Heart left ventricle (tissue), 16 donors: ENCODE measurements at regions of chr20 and their contacts with region 1.

Region 1: GRCh38 chr20:46689082-46689754 is at the start of gene TP53RK:
- DNase-seq: peak; percentile 98 to 99 (median 99)
- ATAC-seq: peak; percentile 97 to 99 (median 98)
- H3K4me3 ChIP-seq: peak within 1 kb of the TSS; percentile 63 to 92 (median 76)
- H3K27ac ChIP-seq: peak within 1 kb of the TSS; percentile 75 to 98 (median 92)
- H3K4me1 ChIP-seq: peaks cover 0 to 33% (median 21%) of the 10 kb centered on the region in 12 donors
- H3K27me3 ChIP-seq: no peaks in the 10 kb centered on the region
- CTCF ChIP-seq: peak in 9 of 12 donors; percentile 10 to 56 (median 39)
- POLR2A ChIP-seq: peak in 1 of 2 donors; percentile 87
- total RNA-seq, gene TP53RK: 5.1 to 10.8 (median 7.9) TPM

Region 2: GRCh38 chr20:46349035-46349741 is 340.0 kb before region 1 on chr20:
- intact Hi-C with region 1: no loop called
- DNase-seq: peak; percentile 41 to 81 (median 55)
- ATAC-seq: peak; percentile 47 to 80 (median 71)
- H3K4me3 ChIP-seq: peak overlapping the region in 4 of 12 donors; percentile 14 to 34 (median 20)
- H3K27ac ChIP-seq: peak overlapping the region in 1 of 12 donors; percentile 0
- H3K4me1 ChIP-seq: peaks cover 0 to 22% (median 9%) of the 10 kb centered on the region in 12 donors
- H3K27me3 ChIP-seq: no peaks in the 10 kb centered on the region
- CTCF ChIP-seq: peak; percentile 65 to 83 (median 77)
- POLR2A ChIP-seq: no peak

Region 3: DNA sequence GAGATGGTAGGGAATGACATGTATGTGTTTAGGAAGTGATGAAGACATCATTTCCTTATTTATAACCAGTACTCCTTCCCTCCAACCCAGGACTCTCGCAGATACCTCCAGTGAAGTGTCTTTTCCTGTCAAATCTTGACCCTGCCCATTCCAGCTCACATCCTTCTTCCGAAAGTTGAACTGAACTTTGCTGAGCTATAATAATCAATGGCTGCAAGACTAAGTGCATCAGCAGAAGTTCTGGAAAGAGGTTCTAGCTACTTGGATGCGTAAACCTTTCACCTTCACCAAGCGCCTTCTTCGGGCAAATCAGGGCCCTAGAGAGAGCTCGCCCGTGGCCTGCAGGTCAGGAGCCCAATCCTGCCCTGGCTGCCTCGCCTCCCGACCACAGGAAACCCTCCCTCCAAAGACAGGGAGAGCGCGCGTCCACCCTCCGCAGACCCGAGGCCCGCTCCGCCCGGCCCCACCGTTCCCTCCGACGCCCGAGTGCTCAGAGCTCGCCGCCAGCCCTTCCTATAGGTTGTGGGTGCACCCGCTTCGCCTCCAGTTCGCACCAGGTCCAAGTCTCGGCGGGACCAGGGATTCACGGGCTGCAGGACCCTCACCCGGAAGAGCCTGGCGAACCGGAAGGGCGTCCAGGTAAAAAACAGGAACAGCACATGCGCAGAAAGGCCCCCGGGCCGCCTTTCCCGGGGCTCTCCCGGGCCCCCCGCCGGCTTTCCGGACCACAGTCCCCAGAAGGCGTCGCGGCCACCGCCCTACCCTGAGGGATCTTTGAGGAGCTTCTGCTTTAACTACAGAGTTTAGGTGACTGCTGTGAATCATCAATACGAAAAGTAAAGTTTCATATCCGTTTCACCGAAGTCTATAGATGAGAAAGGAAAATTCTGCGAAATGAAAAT is 176.0 kb before region 1 on chr20 and contains the start of gene ZNF334:
- intact Hi-C with region 1: loop called in 1 of 10 experiments (anchors 5 kb)
- DNase-seq: peak; percentile 47 to 92 (median 81)
- ATAC-seq: peak; percentile 86 to 98 (median 97)
- H3K4me3 ChIP-seq: peak within 1 kb of the TSS; percentile 42 to 86 (median 69)
- H3K27ac ChIP-seq: peak within 1 kb of the TSS in 9 of 12 donors; percentile 16 to 87 (median 55)
- H3K4me1 ChIP-seq: peaks cover 0 to 13% (median 7%) of the 10 kb centered on the region in 12 donors
- H3K27me3 ChIP-seq: peaks cover 0 to 28% (median 4%) of the 10 kb centered on the region in 9 donors
- CTCF ChIP-seq: no peak
- POLR2A ChIP-seq: peak in 1 of 2 donors; percentile 26
- total RNA-seq, gene ZNF334: 0.31 to 2.5 (median 1.3) TPM

Region 4: GRCh38 chr20:46562373-46563169 is 126.6 kb before region 1 on chr20:
- intact Hi-C with region 1: loop called in 8 of 10 experiments (anchors 2 to 5 kb)
- DNase-seq: peak in 4 of 5 donors; percentile 48 to 77 (median 62)
- ATAC-seq: peak; percentile 79 to 88 (median 84)
- H3K4me3 ChIP-seq: peak overlapping the region in 11 of 12 donors; percentile 16 to 55 (median 41)
- H3K27ac ChIP-seq: peak overlapping the region in 8 of 12 donors; percentile 4 to 70 (median 50)
- H3K4me1 ChIP-seq: peaks cover 0 to 20% (median 8%) of the 10 kb centered on the region in 12 donors
- H3K27me3 ChIP-seq: no peaks in the 10 kb centered on the region
- CTCF ChIP-seq: peak; percentile 85 to 97 (median 92)
- POLR2A ChIP-seq: no peak

Region 5: DNA sequence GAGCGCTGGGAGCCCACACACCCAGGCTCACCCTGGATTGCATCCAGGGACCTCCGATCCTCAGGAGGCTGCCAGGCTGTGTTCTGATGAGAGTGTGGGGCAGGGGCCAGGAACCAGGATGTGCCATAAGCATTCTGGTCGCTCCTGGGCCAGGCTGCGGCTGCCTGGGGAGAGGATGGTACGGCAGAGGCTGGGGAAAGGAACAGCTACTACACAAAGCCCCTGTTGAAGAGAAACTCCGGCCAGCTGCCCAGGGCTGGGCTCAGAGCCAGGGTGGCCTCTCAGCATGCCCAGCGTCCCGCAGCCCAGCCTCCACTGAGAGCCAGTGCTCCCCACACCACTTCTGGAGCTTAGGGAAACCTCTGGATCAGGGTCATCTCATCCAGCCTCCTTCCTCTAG is 117.1 kb before region 1 on chr20:
- intact Hi-C with region 1: loop called in 1 of 10 experiments (anchors 5 kb)
- DNase-seq: peak; percentile 48 to 73 (median 60)
- ATAC-seq: peak in 3 of 4 donors; percentile 51 to 69 (median 54)
- H3K4me3 ChIP-seq: peak overlapping the region in 1 of 12 donors; percentile 12
- H3K27ac ChIP-seq: peak overlapping the region in 4 of 12 donors; percentile 19 to 47 (median 40)
- H3K4me1 ChIP-seq: peaks cover 0 to 25% (median 7%) of the 10 kb centered on the region in 12 donors
- H3K27me3 ChIP-seq: no peaks in the 10 kb centered on the region
- CTCF ChIP-seq: no peak
- POLR2A ChIP-seq: no peak